ENCODE measurements at regions of chr18 and their contacts with region 1.

Region 1: GRCh38 chr18:77505499-77505898 is 255.9 kb downstream of the GALR1 start:
- DNase-seq: no peak
- ATAC-seq: no peak

Region 2: DNA sequence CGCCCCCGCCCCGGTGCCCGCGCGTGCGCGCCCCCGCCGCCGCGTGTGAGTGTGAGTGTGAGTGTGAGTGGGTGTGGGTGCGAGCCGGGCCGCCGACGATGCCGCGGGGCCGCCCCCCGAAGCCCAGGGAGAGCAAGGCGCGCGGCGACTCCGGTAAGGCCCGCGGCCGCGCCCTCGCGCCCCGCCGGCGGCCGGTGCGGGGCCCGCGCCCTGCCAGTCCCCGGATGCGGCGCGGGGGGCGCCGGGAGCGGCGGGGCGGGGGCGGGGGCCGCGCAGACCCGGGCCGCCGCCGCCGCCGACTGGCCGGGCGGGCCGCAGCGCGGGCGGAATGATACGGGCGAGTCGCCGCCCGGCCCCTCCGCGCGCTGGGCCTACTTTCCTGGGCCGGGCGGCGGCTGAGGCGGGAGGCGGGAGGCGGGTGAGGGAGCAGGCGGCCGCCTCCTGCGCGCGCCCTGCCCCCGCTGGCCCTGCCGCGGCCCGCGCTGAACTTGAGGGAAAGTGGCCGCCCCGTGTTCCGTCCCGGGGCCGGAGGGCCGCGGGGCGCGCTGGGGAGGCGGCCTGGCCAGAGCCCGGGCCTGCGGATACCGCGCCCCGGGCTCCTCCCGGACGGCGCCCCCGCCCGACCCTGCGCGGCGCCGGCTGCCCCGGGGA is 682.9 kb before region 1 on chr18 and contains the start of gene ZNF236:
- intact Hi-C with region 1: no loop called
- DNase-seq: peak; percentile 92
- ATAC-seq: peak; percentile 82
- total RNA-seq, gene ZNF236: 10.9 TPM

Region 3: GRCh38 chr18:77466890-77467289 is 38.6 kb before region 1 on chr18:
- intact Hi-C with region 1: loop called (anchors 2 kb)
- DNase-seq: no peak
- ATAC-seq: no peak

Region 4: DNA sequence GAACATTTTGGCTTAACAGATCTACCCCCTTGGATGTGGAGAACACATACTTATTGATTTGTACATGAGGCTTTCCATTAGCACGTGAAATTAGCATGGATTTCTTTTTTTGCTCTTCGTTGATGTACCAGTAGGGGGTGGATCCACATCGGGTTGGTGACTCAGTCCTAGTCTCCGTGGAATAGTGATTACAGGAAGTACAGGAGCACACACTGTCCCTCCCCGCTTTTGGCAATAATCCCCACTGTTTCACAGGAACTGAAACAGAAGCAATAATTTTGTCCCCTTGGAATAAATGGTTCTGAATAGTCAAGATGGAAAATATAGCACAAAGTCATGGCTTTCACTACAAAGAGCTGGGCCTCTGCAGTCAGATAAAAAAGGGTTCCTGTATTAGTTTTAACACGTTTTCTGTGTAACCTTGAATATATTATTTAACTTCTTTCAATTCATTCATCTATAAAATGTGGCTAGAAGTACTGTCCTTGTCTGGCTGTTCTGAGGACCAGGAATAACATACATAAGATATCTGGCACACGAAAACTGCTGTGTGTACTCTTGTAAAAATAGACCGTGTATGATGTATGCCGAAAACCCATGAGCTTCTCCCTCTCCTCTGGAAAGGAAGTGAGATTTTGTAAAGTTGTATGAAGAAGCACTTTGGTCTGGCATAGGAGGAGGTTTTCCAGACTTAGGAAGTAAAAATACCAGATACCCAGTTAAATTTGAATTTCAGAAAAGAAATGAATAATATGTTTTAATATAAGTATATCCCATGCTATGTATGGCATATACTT is 26.7 kb before region 1 on chr18:
- intact Hi-C with region 1: no loop called
- DNase-seq: no peak
- ATAC-seq: peak; percentile 97

Region 5: DNA sequence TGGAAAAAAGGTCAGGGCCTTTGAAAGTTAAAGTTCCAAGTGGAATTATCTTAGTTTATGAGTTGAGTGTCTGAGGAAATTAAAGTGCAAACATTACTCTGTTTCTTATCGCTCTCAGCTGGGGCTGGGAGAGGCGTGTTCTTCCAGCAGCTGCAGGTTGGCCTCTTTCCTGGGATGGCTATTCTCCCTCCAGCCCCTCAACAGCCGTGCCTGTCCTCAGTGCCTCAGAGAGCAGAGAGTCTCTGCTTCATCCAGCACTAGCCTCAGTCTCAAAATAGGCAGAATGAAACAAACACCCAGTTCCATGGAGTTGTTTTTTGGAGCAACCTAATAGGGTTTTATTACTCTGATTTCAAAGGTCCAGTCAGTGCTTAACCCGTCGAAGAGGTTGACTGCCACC is 42.3 kb after region 1 on chr18:
- intact Hi-C with region 1: no loop called
- DNase-seq: peak; percentile 71
- ATAC-seq: peak; percentile 97

Region 6: DNA sequence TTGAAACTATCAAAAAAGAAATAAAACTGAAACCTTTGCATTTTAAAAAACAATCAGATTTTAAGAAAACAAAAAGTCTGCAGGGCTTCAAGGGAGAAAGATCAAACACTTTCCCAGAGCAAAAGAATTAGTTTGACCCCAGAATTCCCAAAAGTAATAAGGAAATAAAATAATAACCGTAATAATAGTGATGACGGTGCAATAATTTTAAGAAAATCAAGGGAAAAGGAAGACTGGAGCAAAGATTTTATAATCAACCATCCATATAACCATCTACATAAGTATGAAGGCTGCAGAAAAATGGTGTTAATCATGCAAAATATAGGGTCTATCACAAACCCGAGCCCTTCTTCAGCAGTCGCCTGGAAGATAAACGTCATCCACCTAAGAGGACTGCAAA is 379.0 kb after region 1 on chr18:
- intact Hi-C with region 1: no loop called
- DNase-seq: no peak
- ATAC-seq: no peak